PC-3 (cell line): ENCODE measurements at regions of chr14 and their contacts with region 1.

Region 1: GRCh38 chr14:65222440-65222858 is 120.1 kb upstream of the MAX start:
- DNase-seq: peak; percentile 78
- ATAC-seq: peak; percentile 44
- H3K4me3 ChIP-seq: no peak overlapping the region
- H3K27ac ChIP-seq: peak overlapping the region; percentile 22
- H3K4me1 ChIP-seq: peaks cover 41% of the 10 kb centered on the region
- H3K27me3 ChIP-seq: no peaks in the 10 kb centered on the region
- CTCF ChIP-seq: peak; percentile 97

Region 2: GRCh38 chr14:63308723-63309317 is 1913.6 kb before region 1 on chr14:
- CTCF ChIA-PET with region 1: no interaction called
- POLR2A ChIA-PET with region 1: no interaction called
- intact Hi-C with region 1: no loop called
- DNase-seq: peak; percentile 55
- ATAC-seq: peak; percentile 93
- H3K4me3 ChIP-seq: no peak overlapping the region
- H3K27ac ChIP-seq: no peak overlapping the region
- H3K4me1 ChIP-seq: no peaks in the 10 kb centered on the region
- H3K27me3 ChIP-seq: peaks cover 59% of the 10 kb centered on the region
- CTCF ChIP-seq: peak; percentile 82

Region 3: DNA sequence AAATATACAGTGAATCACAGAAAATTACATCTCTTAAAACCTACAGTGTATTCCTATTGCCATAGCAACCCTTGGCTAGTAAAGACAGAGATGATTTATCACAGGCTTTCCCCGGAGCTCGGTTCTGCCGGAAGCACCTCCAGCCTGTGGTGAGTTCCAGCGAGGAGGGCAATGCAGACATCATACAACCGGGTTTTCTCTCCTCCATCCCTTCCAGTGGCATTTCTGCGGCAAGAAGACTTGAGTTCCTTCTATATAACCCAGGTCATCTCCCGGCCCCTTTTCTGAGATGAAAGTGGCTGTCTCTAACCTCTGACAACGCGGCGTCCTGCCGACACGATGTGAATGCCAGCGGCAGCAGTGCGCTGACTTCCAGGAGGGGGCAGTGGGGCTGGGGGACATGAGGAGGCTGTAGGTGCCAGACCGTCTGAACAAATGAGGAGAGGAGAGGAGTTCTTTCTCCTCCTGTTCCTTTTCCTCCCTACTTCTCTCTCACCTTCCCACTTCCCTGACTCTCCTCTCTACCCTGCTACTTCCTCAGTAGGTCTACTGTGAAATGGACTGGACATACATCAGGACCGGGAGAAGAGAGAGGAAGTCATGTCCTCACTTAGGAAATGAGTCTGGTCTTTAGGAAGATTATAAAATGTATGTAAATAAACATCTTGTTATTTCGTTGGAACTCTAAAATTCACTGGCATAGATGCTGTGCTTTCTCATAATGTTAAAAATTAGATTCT is 51.5 kb before region 1 on chr14:
- CTCF ChIA-PET with region 1: interaction called, 6 read pairs
- POLR2A ChIA-PET with region 1: no interaction called
- intact Hi-C with region 1: loop called (anchors 2 kb)
- DNase-seq: peak; percentile 80
- ATAC-seq: peak; percentile 86
- H3K4me3 ChIP-seq: peak overlapping the region; percentile 65
- H3K27ac ChIP-seq: peak overlapping the region; percentile 56
- H3K4me1 ChIP-seq: peaks cover 18% of the 10 kb centered on the region
- H3K27me3 ChIP-seq: no peaks in the 10 kb centered on the region
- CTCF ChIP-seq: peak; percentile 76

Region 4: GRCh38 chr14:65239143-65239937 is 16.9 kb after region 1 on chr14:
- CTCF ChIA-PET with region 1: interaction called, 6 read pairs
- POLR2A ChIA-PET with region 1: interaction called, 27 read pairs
- intact Hi-C with region 1: no loop called
- DNase-seq: no peak
- ATAC-seq: no peak
- H3K4me3 ChIP-seq: no peak overlapping the region
- H3K27ac ChIP-seq: peak overlapping the region; percentile 69
- H3K4me1 ChIP-seq: peaks cover 68% of the 10 kb centered on the region
- H3K27me3 ChIP-seq: no peaks in the 10 kb centered on the region
- CTCF ChIP-seq: no peak

Region 5: GRCh38 chr14:65255536-65256461 is 33.4 kb after region 1 on chr14:
- CTCF ChIA-PET with region 1: interaction called, 3 read pairs
- POLR2A ChIA-PET with region 1: no interaction called
- intact Hi-C with region 1: loop called (anchors 1 kb)
- DNase-seq: peak; percentile 95
- ATAC-seq: peak; percentile 62
- H3K4me3 ChIP-seq: peak overlapping the region; percentile 34
- H3K27ac ChIP-seq: peak overlapping the region; percentile 96
- H3K4me1 ChIP-seq: peaks cover 58% of the 10 kb centered on the region
- H3K27me3 ChIP-seq: no peaks in the 10 kb centered on the region
- CTCF ChIP-seq: no peak

Region 6: DNA sequence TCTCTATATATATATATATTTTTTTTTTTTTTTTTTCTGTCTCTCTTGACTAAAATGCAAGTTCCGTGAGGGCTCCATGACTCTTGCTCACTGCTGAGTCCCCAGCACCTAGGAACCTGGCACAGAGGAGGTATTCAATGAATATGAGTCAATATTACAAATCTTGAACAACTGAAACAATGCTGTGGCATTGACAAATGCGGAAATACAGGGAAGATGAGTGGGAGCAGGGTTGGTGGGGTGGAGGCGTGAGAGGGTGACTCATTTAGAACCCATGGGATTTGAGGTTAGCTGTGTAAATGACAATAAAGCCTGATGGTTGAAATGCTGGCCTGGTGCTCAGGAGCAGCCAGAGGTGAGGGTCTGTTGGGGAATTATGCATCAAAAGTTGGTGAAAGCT is 68.4 kb after region 1 on chr14:
- CTCF ChIA-PET with region 1: interaction called, 4 read pairs
- POLR2A ChIA-PET with region 1: interaction called, 5 read pairs
- intact Hi-C with region 1: loop called (anchors 2 kb)
- DNase-seq: peak; percentile 99
- ATAC-seq: peak; percentile 95
- H3K4me3 ChIP-seq: no peak overlapping the region
- H3K27ac ChIP-seq: peak overlapping the region; percentile 96
- H3K4me1 ChIP-seq: peaks cover 20% of the 10 kb centered on the region
- H3K27me3 ChIP-seq: no peaks in the 10 kb centered on the region
- CTCF ChIP-seq: no peak

Region 7: GRCh38 chr14:65356327-65356852 is 133.9 kb after region 1 on chr14:
- CTCF ChIA-PET with region 1: interaction called, 6 read pairs
- POLR2A ChIA-PET with region 1: no interaction called
- intact Hi-C with region 1: loop called (anchors 1 kb)
- DNase-seq: peak; percentile 100
- ATAC-seq: peak; percentile 83
- H3K4me3 ChIP-seq: peak overlapping the region; percentile 13; the same call in 1 of the 2 replicates
- H3K27ac ChIP-seq: peak overlapping the region; percentile 97
- H3K4me1 ChIP-seq: peaks cover 68% of the 10 kb centered on the region
- H3K27me3 ChIP-seq: no peaks in the 10 kb centered on the region
- CTCF ChIP-seq: no peak

Region 8: GRCh38 chr14:65373679-65374039 is 151.2 kb after region 1 on chr14:
- CTCF ChIA-PET with region 1: no interaction called
- POLR2A ChIA-PET with region 1: no interaction called
- intact Hi-C with region 1: loop called (anchors 1 kb)
- DNase-seq: peak; percentile 29
- ATAC-seq: peak; percentile 75
- H3K4me3 ChIP-seq: peak overlapping the region; percentile 58
- H3K27ac ChIP-seq: 0 out of 2 replicates have a peak overlapping the region, but pooled peaks have one; percentile 0
- H3K4me1 ChIP-seq: no peaks in the 10 kb centered on the region
- H3K27me3 ChIP-seq: no peaks in the 10 kb centered on the region
- CTCF ChIP-seq: peak; percentile 28; the same call in 1 of the 2 replicates